ENCODE measurements at regions of chrX and their contacts with region 1.

Region 1: DNA sequence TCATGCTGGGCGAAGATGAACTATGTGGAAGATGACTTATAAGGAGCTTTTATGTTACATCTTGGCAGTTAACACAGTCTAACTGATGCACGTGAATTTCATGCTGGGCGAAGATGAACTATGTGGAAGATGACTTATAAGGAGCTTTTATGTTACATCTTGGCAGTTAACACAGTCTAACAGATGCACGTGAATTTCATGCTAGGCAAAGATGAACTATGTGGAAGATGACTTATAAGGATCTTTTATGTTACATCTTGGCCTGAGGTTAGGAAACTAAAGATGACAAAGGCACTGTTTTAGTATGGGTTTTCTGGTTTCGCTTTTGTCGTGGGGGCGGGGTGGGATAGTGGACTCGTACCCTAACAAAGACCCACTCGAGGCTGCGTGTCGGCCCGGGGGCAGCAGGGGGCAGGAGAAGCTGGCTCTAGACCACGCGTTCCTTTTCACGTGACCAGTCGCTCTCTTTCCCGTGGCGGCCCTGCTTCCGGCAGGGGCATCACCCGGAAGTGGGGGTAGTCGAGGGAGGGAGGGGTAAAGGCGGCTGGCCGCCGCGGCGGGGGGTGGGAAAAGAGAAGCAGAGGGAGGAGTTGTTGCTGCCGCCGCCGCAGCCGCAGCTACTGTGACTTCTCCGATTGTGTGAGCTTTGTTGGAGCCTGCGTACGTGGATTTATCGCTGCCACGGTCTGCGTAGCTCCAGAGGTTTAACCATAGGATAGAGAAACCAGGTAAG is at the start of gene ATP7A:
- DNase-seq: peak; percentile 92
- H3K4me3 Mint-ChIP-seq: peak within 1 kb of the TSS; percentile 98
- H3K27ac Mint-ChIP-seq: peak within 1 kb of the TSS; percentile 97
- H3K4me1 Mint-ChIP-seq: peaks cover 21% of the 10 kb centered on the region
- H3K27me3 Mint-ChIP-seq: no peaks in the 10 kb centered on the region
- total RNA-seq, gene ATP7A: 12.6 to 13.3 TPM

Region 2: DNA sequence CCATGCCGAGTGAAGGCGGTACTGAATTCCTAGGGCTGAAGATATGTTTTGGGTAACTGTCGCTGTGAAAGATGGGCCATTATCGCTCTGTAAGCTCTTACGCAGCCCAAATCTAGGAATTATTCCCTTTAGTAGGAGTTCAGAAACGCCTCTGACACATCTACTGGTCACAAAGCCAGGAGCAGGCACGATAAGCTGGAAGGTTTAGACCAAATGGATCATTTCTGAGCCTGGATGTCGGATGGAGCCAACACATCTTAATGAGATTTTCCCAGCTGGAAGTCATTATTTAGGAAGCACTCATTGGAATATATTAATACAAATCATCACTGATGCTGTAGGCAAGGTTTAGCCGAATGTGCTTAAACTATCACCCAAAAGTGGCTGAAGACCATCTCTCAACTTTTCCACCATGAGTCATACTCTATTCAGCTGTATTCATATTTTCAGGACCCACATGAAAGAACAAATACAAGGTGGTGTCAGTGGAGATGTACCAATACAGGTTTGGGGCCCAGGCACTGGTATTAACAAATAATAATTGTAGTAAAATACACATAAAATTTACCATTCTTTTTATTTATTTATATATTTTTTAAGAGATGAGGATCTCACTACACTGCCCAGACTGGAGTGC is 90.1 kb before region 1 on chrX:
- CTCF ChIA-PET with region 1: no interaction called
- POLR2A ChIA-PET with region 1: no interaction called
- DNase-seq: no peak
- H3K4me3 Mint-ChIP-seq: no peak overlapping the region
- H3K27ac Mint-ChIP-seq: no peak overlapping the region
- H3K4me1 Mint-ChIP-seq: peaks cover 1% of the 10 kb centered on the region
- H3K27me3 Mint-ChIP-seq: no peaks in the 10 kb centered on the region

Region 3: GRCh38 chrX:78024349-78025108 is 114.3 kb after region 1 on chrX:
- CTCF ChIA-PET with region 1: interaction called, 14 read pairs
- POLR2A ChIA-PET with region 1: interaction called, 6 read pairs
- DNase-seq: peak; percentile 16
- H3K4me3 Mint-ChIP-seq: no peak overlapping the region
- H3K27ac Mint-ChIP-seq: no peak overlapping the region
- H3K4me1 Mint-ChIP-seq: no peaks in the 10 kb centered on the region
- H3K27me3 Mint-ChIP-seq: no peaks in the 10 kb centered on the region

Measured in activated CD4-positive, alpha-beta memory T cell treated with anti-CD3 and anti-CD28 coated beads, Interleukin-2, amount 10 ng/mL, durations not matched to agents 7 days and 5 days (primary cell).